A673 (cell line): ENCODE measurements at regions of chr12 and their contacts with region 1.

Region 1: DNA sequence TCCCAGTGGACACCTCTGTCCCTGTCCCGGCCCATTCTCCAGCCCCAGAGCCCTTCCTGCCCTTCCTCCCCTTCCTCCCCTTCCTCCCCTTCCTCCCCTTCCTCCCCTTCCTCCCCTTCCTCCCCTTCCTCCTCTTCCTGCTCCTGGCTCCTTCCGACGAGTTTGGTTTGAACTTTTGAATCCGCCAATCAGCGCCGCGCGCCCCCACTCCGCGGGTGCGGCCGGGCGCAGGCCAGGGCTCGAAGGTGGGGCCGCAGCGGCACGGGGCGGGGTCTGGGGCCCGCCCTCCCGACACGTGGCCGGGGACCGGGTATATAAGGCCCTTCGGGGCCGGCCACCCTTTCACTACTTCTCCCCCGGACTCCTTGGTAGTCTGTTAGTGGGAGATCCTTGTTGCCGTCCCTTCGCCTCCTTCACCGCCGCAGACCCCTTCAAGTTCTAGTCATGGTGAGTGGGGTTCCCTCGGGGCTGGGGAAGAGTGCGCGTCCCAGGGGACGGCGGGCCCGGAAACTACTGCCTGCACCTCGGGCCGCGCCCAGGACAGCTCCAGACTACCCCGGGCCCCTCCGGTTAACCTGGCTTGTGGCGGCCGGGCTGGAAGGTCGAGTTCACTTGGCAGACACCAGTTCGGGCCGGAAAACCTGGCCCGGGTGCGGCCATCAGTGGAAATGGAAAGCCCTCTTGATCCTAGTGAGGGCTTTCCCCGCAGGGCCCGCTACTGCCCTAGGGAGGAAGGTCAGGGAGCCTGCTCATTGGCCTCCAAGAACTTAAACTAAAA is at the start of gene TUBA1C:
- DNase-seq: peak; percentile 96
- H3K4me3 ChIP-seq: peak within 1 kb of the TSS; percentile 81
- H3K27ac ChIP-seq: peak within 1 kb of the TSS; percentile 95
- H3K4me1 ChIP-seq: peaks cover 28% of the 10 kb centered on the region
- H3K27me3 ChIP-seq: no peaks in the 10 kb centered on the region
- CTCF ChIP-seq: no peak
- total RNA-seq, gene TUBA1C: 510 and 622 TPM in 2 replicates

Region 2: DNA sequence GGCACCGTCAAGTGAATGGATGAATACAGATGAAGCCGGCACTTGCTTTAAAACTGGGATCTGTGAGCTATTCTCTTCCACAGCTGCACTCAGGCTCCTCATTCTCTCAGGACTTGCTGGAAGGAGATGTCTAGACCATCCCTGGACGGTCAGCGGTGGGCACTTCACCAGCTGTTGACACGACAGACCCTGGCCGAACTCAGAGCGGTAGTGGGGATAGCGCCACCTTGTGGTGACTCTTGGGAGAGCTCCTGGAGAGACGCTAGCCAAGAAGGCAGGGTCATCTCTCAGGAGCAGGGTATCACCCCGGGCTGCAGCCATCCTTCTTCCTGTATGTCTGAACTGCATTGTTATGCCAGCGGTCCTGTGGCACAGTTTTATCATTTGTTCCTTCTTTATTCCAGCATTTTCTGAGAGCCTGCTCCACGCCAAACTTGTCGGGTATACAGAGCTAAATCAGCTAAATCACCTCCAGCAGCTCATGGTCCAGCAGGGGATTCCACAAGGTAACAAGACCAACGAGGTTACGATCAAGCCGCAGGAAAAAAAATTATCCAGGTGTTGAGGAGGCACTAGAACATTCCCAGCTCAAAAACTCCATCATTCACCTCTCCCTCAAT is 276.8 kb before region 1 on chr12:
- CTCF ChIA-PET with region 1: interaction called, 14 read pairs
- POLR2A ChIA-PET with region 1: no interaction called
- intact Hi-C with region 1: no loop called
- DNase-seq: peak; percentile 60
- H3K4me3 ChIP-seq: no peak overlapping the region
- H3K27ac ChIP-seq: no peak overlapping the region
- H3K4me1 ChIP-seq: peaks cover 17% of the 10 kb centered on the region
- H3K27me3 ChIP-seq: peaks cover 19% of the 10 kb centered on the region
- CTCF ChIP-seq: peak; percentile 97

Region 3: GRCh38 chr12:49138587-49138986 is 126.3 kb before region 1 on chr12:
- CTCF ChIA-PET with region 1: no interaction called
- POLR2A ChIA-PET with region 1: interaction called, 13 read pairs
- intact Hi-C with region 1: no loop called
- DNase-seq: peak; percentile 91
- H3K4me3 ChIP-seq: no peak overlapping the region
- H3K27ac ChIP-seq: peak overlapping the region; percentile 43
- H3K4me1 ChIP-seq: peaks cover 8% of the 10 kb centered on the region
- H3K27me3 ChIP-seq: no peaks in the 10 kb centered on the region
- CTCF ChIP-seq: no peak

Region 4: GRCh38 chr12:49279706-49280159 is 14.8 kb after region 1 on chr12:
- CTCF ChIA-PET with region 1: no interaction called
- POLR2A ChIA-PET with region 1: no interaction called
- intact Hi-C with region 1: no loop called
- DNase-seq: peak; percentile 52
- H3K4me3 ChIP-seq: no peak overlapping the region
- H3K27ac ChIP-seq: no peak overlapping the region
- H3K4me1 ChIP-seq: peaks cover 9% of the 10 kb centered on the region
- H3K27me3 ChIP-seq: no peaks in the 10 kb centered on the region
- CTCF ChIP-seq: no peak